ENCODE measurements at regions of chr15 and their contacts with region 1.

Region 1: DNA sequence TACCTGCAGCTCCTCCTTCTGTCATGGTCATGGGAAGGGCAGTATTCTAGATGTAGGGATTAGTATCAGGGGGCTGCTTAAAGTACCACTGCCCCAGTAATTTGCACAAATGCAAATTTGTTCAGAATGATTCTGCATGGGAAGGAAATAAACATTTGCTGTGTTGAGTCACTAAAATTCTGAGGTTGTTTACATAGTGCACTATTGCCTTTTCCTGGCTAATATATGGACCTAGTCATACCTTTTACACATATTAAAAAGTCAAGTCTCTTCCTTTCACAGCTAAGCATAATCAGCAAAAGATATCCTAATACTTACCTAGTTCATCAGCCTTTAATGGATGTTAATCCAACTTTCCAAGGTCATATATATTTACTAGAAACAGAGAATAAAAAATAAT is 746.4 kb upstream of the NR2F2 start:
- DNase-seq: no peak
- H3K4me3 ChIP-seq: no peak overlapping the region
- H3K27ac ChIP-seq: no peak overlapping the region
- H3K27me3 ChIP-seq: no peaks in the 10 kb centered on the region
- CTCF ChIP-seq: no peak

Region 2: DNA sequence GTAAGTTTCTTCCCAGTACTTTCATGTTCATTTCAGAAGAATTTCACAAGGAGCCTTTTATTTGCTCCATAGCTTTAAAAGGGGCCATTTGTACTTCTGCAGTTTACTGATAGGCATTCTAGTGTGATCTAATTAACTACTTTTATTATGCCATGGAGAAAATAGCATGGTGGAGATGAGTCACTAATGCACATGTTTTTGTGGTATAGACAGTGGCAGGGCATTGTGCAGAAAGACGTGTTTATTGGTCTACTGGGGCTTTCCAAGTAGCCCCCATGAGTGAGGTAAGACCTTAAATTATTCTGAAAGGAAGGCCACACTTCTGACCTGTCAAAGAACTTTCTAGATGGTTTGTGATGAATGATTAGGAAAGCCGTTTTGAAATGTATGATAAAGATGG is 63.6 kb before region 1 on chr15:
- CTCF ChIA-PET with region 1: interaction called, 11 read pairs
- POLR2A ChIA-PET with region 1: no interaction called
- DNase-seq: no peak
- H3K4me3 ChIP-seq: no peak overlapping the region
- H3K27ac ChIP-seq: no peak overlapping the region
- H3K27me3 ChIP-seq: no peaks in the 10 kb centered on the region
- CTCF ChIP-seq: no peak